Activated CD4-positive, alpha-beta T cell treated with anti-CD3 and anti-CD28 coated beads, Interleukin-2, amount 10 ng/mL, durations not matched to agents 24 days and 14 days (primary cell): ENCODE measurements at regions of chr2 and their contacts with region 1.

Region 1: GRCh38 chr2:127398239-127398590 is 10.4 kb upstream of the MAP3K2 start:
- DNase-seq: peak; percentile 81
- H3K4me3 Mint-ChIP-seq: no peak overlapping the region
- H3K27ac Mint-ChIP-seq: peak overlapping the region; percentile 81
- H3K4me1 Mint-ChIP-seq: peaks cover 19% of the 10 kb centered on the region
- H3K27me3 Mint-ChIP-seq: peaks cover 2% of the 10 kb centered on the region

Region 2: DNA sequence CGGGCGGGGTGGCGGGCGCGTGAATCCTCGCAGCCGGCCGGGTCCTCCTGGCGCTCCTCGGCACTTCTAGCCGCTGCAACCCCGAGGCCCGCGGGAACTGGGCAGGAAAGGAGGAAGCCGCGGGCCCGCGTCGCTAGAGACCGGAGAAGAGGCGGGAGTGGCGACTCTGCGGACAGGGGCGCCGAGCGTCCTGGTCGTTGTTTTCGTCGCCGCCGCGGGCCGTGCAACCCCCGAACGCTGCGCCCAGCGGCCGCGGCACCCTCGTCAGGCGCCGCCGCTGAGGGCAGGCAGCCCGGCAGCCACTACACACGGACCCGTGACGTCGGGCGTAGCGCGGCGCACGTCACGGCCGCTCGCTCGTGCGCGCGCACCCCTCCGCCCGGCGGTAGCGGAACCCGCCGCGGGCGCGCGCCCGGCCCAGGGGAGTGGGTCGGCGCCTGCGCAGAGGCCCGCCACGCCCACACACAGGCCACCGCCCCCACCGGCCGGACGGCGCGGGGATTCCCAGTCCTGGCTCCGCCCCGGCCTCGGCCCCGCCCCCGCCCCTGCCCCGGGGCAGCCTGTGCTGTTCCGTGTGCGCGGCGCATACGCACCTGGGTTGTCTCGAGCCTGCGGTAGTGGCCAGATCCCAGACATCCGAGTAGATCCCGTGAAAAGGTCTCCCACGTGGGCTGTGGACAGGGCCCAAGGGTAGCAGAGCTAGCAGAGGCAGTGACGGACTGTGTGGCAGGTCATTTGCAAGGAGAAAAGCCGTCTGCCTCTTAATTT is 10.4 kb before region 1 on chr2 and contains the start of gene MAP3K2:
- intact Hi-C with region 1: loop called (anchors 1 kb)
- DNase-seq: peak; percentile 98
- H3K4me3 Mint-ChIP-seq: peak within 1 kb of the TSS; percentile 88
- H3K27ac Mint-ChIP-seq: peak within 1 kb of the TSS; percentile 98
- H3K4me1 Mint-ChIP-seq: peaks cover 63% of the 10 kb centered on the region
- H3K27me3 Mint-ChIP-seq: no peaks in the 10 kb centered on the region
- total RNA-seq, gene MAP3K2: 53.7 and 57.5 TPM in 2 replicates

Region 3: DNA sequence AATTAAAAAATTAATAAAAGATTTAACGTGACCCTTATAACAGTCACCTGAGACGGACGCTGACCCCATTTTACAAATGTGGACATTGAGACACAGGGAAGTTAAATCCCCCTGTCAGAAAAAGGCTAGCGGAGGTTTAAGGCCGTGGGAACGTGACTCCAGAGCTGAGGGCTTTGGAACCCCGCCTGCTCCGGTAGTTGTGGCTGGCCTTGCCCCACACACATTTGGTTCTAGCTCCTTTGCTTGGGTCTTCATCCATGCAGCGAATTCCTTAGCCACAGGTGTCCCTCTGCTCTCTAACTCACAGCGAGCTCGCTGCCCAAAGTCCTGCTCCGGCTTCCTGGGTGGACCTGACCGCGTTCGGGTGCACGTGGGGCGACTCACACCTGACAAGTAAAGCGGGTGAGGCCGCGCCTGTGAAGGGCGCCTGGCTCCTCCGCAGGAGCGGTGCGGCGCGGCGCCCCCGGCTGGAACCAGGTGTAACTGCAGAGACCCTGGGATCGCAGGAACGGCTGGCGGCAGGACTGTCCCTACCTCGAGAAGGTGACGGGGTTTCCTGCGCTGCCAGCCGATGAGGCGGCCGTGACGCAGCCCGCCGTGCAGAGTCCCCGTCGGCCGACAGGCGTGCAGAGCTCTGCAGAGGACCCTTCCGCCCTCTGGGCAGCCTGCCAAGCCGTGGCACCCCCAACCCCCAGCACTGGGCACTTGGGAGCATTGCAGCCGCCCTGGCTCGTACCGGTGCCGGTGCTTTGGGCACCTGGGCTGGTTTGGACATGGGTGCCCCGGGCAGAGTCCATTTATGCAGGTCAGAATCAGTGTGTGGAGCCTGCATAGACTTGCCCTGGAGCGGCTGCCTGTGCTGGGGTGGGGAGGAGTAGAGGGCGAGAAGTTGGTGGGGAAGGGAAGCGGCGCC is 17.6 kb after region 1 on chr2:
- intact Hi-C with region 1: no loop called
- DNase-seq: peak; percentile 92
- H3K4me3 Mint-ChIP-seq: peak overlapping the region; percentile 81
- H3K27ac Mint-ChIP-seq: peak overlapping the region; percentile 56
- H3K4me1 Mint-ChIP-seq: peaks cover 30% of the 10 kb centered on the region
- H3K27me3 Mint-ChIP-seq: peaks cover 26% of the 10 kb centered on the region

Region 4: DNA sequence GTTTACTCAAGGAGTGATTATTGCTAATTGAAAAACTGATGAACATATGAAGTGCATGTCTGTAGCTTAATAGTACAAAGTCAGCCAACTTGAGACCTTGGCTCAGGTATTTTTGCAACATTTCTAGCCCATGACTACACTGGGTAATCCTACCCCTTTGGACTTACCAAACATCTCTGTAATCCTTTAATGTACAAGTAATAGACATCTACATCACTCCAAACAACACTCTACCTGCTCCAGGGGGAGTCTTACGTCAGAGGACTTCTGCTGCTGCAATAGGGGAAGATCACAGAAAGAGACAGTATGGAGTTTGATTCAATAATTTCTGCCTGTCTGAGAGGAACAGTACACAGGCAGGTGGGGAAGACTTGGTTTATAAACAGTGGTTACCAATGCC is 74.1 kb after region 1 on chr2:
- intact Hi-C with region 1: loop called (anchors 2 kb)
- DNase-seq: no peak
- H3K4me3 Mint-ChIP-seq: no peak overlapping the region
- H3K27ac Mint-ChIP-seq: no peak overlapping the region
- H3K4me1 Mint-ChIP-seq: peaks cover 2% of the 10 kb centered on the region
- H3K27me3 Mint-ChIP-seq: no peaks in the 10 kb centered on the region